Activated CD4-positive, alpha-beta T cell treated with anti-CD3 and anti-CD28 coated beads for 36 hours (primary cell): ENCODE measurements at regions of chr19 and their contacts with region 1.

Region 1: DNA sequence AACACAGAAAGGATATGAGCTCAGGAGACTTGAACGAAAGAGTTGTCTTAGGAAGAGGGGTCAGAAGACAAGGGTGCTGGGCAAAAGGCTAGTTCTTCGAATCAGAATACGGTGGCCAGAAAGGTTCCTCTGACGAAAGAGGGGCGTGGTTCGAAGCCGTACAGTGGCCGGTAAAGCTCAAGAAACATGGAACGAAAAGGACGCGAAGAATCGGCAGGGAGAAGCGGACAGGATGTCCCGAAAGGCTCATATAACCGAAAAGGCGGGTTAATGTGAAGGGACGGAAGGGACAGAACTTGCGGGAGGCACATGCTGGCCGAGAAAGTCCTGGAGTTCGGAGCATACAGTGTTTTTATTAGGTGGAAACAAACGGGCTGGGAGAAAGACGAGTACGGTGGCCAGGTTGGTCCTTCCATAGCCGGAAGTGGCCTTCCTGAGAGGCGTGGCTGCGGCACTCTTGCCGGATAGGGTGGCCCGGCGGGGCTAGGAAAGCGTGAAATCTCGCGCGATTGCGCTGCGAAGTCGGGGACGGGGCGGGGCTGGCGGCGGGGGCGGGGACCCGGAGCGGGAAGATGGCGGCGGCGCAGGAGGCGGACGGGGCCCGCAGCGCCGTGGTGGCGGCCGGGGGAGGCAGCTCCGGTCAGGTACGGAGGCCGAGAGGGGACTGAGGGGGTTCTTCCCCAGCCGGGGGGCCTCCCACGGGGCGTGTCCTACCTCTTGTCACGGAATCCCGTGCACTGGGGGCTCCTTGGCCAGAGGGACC is at the start of gene CLPTM1:
- DNase-seq: peak; percentile 99
- ATAC-seq: peak; percentile 94
- H3K4me3 Mint-ChIP-seq: peak within 1 kb of the TSS; percentile 95
- H3K27ac Mint-ChIP-seq: peak within 1 kb of the TSS; percentile 100
- H3K4me1 Mint-ChIP-seq: peaks cover 39% of the 10 kb centered on the region
- H3K27me3 Mint-ChIP-seq: no peaks in the 10 kb centered on the region
- total RNA-seq, gene CLPTM1: 41.6 to 44.1 TPM

Region 2: DNA sequence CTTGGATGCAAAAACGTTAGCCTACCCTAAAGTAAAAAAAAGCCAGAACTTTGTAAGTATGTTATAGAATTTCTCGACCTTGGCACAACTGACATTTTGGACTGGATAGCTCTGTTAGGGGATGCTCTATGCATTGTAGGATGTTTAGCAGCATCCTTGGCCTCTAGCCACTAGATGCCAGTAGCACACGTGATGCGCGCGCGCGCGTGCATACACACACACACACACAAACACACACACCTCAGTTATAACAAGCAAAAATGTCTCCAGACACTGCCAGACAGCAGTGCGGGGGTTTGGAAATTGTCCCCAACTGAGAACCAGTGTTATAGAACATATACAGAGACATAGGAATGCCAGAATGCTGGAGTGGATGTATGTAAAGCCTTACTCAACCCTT is 772.9 kb before region 1 on chr19:
- CTCF ChIA-PET with region 1: no interaction called
- POLR2A ChIA-PET with region 1: no interaction called
- intact Hi-C with region 1: no loop called
- DNase-seq: no peak
- ATAC-seq: no peak
- H3K4me3 Mint-ChIP-seq: no peak overlapping the region
- H3K27ac Mint-ChIP-seq: no peak overlapping the region
- H3K4me1 Mint-ChIP-seq: no peaks in the 10 kb centered on the region
- H3K27me3 Mint-ChIP-seq: no peaks in the 10 kb centered on the region

Region 3: GRCh38 chr19:44576843-44577565 is 378.0 kb before region 1 on chr19:
- CTCF ChIA-PET with region 1: no interaction called
- POLR2A ChIA-PET with region 1: no interaction called
- intact Hi-C with region 1: no loop called
- DNase-seq: peak; percentile 63
- ATAC-seq: peak; percentile 72
- H3K4me3 Mint-ChIP-seq: no peak overlapping the region
- H3K27ac Mint-ChIP-seq: no peak overlapping the region
- H3K4me1 Mint-ChIP-seq: no peaks in the 10 kb centered on the region
- H3K27me3 Mint-ChIP-seq: no peaks in the 10 kb centered on the region

Region 4: GRCh38 chr19:44689056-44689895 is 265.7 kb before region 1 on chr19:
- CTCF ChIA-PET with region 1: no interaction called
- POLR2A ChIA-PET with region 1: no interaction called
- intact Hi-C with region 1: loop called in 1 of 2 experiments (anchors 1 kb)
- DNase-seq: peak; percentile 90
- ATAC-seq: peak; percentile 39
- H3K4me3 Mint-ChIP-seq: no peak overlapping the region
- H3K27ac Mint-ChIP-seq: no peak overlapping the region
- H3K4me1 Mint-ChIP-seq: peaks cover 42% of the 10 kb centered on the region
- H3K27me3 Mint-ChIP-seq: peaks cover 17% of the 10 kb centered on the region

Region 5: GRCh38 chr19:44800461-44800860 is 154.5 kb before region 1 on chr19:
- CTCF ChIA-PET with region 1: no interaction called
- POLR2A ChIA-PET with region 1: no interaction called
- intact Hi-C with region 1: loop called in 1 of 2 experiments (anchors 1 kb)
- DNase-seq: peak; percentile 92
- ATAC-seq: peak; percentile 98
- H3K4me3 Mint-ChIP-seq: no peak overlapping the region
- H3K27ac Mint-ChIP-seq: no peak overlapping the region
- H3K4me1 Mint-ChIP-seq: peaks cover 11% of the 10 kb centered on the region
- H3K27me3 Mint-ChIP-seq: no peaks in the 10 kb centered on the region

Region 6: DNA sequence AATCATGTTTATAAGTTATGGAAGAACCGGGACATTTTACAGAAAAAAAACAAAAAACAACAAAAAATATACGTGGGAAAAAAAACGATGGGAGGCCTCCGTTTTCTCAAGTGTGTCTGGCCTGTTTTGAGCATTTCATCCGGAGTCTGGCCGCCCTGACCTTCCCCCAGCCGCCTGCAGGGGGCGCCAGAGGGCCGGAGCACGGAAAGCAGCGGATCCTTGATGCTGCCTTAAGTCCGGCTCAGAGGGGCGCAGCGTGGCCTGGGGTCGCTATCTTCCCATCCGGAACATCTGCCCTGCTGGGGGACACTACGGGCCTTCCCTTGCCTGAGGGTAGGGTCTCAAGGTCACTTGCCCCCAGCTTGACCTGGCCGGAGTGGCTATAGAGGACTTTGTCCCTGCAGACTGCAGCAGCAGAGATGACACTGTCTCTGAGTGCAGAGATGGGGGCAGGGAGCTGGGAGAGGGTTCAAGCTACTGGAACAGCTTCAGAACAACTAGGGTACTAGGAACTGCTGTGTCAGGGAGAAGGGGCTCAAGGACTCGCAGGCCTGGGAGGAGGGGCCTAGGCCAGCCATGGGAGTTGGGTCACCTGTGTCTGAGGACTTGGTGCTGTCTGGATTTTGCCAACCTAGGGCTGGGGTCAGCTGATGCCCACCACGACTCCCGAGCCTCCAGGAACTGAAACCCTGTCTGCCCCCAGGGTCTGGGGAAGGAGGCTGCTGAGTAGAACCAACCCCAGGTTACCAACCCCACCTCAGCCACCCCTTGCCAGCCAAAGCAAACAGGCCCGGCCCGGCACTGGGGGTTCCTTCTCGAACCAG is 51.2 kb before region 1 on chr19:
- CTCF ChIA-PET with region 1: interaction called, 8 read pairs
- POLR2A ChIA-PET with region 1: interaction called, 3 read pairs
- intact Hi-C with region 1: loop called (anchors 1 to 2 kb)
- DNase-seq: peak; percentile 85
- ATAC-seq: peak; percentile 67
- H3K4me3 Mint-ChIP-seq: no peak overlapping the region
- H3K27ac Mint-ChIP-seq: no peak overlapping the region
- H3K4me1 Mint-ChIP-seq: peaks cover 8% of the 10 kb centered on the region
- H3K27me3 Mint-ChIP-seq: peaks cover 17% of the 10 kb centered on the region

Region 7: DNA sequence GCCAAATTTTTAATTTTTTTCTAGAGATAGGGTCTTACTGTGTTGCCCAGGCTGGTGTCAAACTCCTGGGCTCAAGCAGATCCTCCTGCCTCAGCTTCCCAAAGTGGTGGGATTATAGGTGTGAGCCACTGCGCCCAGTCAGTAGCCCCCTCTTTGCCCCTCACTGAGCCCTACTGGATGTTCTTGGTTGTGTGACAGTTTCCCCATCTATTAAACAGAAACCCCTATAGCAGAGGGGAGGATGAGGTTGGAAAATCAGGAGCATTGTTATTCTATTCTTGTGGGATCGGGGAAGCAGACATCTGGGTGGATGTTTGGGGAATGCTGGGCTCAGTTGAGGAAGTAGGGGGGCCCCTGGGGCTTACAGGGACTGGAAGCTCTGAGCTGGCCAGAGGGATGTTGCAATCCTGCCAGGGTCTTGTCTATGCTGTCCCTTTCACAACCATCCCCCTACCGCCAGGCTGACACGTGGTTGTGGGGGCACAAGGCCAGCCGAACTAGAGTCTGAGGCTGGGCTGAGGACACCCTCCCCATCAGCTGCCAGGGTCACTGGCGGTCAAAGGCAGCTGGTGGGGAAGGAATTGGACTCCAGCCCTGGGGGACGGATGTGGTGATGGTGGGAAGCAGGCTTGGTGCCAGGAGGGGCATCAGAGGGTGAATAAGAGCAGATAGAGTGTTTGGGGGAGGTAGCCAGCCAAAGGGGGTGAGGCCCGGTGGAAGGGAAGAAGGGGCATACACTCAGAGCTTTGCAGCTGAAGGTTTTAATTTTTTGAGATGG is 29.7 kb before region 1 on chr19:
- CTCF ChIA-PET with region 1: no interaction called
- POLR2A ChIA-PET with region 1: no interaction called
- intact Hi-C with region 1: no loop called
- DNase-seq: no peak
- ATAC-seq: no peak
- H3K4me3 Mint-ChIP-seq: no peak overlapping the region
- H3K27ac Mint-ChIP-seq: no peak overlapping the region
- H3K4me1 Mint-ChIP-seq: peaks cover 4% of the 10 kb centered on the region
- H3K27me3 Mint-ChIP-seq: peaks cover 17% of the 10 kb centered on the region

Region 8: DNA sequence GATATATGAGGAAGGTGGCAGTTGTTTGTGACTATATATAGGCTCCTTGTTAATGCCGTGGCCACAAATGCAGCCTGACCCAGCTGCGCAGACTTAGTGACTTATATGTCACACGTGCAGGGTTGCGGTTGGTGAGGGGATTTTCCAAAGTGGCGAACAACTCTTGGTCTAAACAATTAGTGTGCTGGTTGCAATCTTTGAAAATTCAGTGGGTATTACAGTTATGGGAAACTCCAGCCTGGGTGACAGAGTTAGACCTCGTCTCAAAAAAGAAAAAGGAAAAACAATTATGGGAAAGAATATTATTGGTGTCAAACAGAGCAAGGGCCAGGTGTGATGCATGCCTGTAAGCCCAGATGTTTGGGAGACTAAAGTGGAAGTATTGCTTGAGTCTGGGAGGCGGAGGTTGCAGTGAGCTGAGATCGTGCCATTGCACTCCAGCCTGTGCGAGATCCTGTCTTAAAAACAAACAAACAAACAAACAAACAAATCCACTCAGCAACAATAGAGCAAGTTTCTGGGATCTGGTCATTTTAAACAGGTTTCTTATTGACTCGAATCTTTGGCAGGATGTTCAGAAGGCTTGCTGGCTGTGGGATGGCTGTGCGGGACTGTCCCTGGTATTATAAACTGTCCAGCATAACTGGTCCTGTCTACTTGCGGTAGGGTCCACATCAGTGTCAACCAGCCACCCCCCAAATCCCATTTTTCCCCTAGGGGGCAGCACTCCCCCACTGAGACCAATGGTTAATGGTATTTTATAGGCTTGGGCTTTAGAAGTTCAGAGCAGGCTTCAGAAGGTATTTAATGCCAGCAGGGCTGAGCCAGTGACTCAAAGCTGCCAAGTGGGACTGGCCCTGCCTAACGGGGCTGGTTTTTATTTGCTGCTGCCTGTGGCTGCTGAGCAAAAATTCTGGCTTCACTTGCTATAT is 61.6 kb after region 1 on chr19:
- CTCF ChIA-PET with region 1: no interaction called
- POLR2A ChIA-PET with region 1: no interaction called
- intact Hi-C with region 1: no loop called
- DNase-seq: peak; percentile 83
- ATAC-seq: peak; percentile 79
- H3K4me3 Mint-ChIP-seq: peak overlapping the region; percentile 40
- H3K27ac Mint-ChIP-seq: peak overlapping the region; percentile 83
- H3K4me1 Mint-ChIP-seq: peaks cover 9% of the 10 kb centered on the region
- H3K27me3 Mint-ChIP-seq: no peaks in the 10 kb centered on the region

Region 9: GRCh38 chr19:45038931-45039893 is 84.2 kb after region 1 on chr19 and contains the start of gene CLASRP:
- CTCF ChIA-PET with region 1: no interaction called
- POLR2A ChIA-PET with region 1: interaction called, 4 read pairs
- intact Hi-C with region 1: loop called in 1 of 2 experiments (anchors 1 kb)
- DNase-seq: peak; percentile 94
- ATAC-seq: peak; percentile 96
- H3K4me3 Mint-ChIP-seq: peak within 1 kb of the TSS; percentile 97
- H3K27ac Mint-ChIP-seq: peak within 1 kb of the TSS; percentile 96
- H3K4me1 Mint-ChIP-seq: peaks cover 32% of the 10 kb centered on the region
- H3K27me3 Mint-ChIP-seq: no peaks in the 10 kb centered on the region
- total RNA-seq, gene CLASRP: 101 to 103 TPM

Region 10: DNA sequence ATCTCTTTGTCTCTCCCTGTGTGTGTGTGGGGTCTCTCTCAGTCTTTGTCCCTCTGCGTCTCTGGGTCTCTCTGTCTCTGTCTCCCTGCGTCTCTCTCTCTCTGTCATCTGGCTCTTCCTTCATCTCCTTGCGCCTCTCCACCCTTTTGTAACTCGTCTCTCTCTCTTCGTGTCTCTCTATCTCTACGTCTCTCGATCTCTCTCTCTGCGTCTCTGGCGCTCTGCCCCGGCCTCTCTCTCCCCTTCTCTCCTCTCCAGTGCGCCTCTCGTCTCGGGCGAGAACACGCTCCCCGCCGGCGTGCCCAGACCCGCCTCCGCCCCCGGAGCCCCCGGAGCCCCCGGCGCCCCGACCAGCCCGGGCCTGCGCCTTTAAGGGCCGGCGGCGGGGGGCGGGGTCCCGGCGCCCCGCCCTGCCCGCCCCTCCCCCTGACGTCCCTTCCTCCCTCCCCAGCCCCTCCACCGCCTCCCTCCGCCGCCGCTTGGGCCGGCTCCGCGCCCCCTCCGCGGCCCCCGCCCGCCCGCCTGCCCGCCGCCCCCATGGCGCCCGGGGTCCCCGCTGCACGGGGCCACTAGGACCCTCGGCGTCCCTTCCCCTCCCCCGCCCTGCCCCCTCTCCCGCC is 295.9 kb after region 1 on chr19 and contains the start of gene MARK4:
- CTCF ChIA-PET with region 1: no interaction called
- POLR2A ChIA-PET with region 1: no interaction called
- intact Hi-C with region 1: loop called in 1 of 2 experiments (anchors 1 kb)
- DNase-seq: peak; percentile 72
- ATAC-seq: peak; percentile 67
- H3K4me3 Mint-ChIP-seq: peak within 1 kb of the TSS; percentile 77
- H3K27ac Mint-ChIP-seq: peak within 1 kb of the TSS; percentile 76
- H3K4me1 Mint-ChIP-seq: peaks cover 29% of the 10 kb centered on the region
- H3K27me3 Mint-ChIP-seq: peaks cover 2% of the 10 kb centered on the region
- total RNA-seq, gene MARK4: 19.1 to 19.6 TPM

Region 11: GRCh38 chr19:45886427-45887199 is 931.6 kb after region 1 on chr19:
- CTCF ChIA-PET with region 1: no interaction called
- POLR2A ChIA-PET with region 1: no interaction called
- intact Hi-C with region 1: loop called in 1 of 2 experiments (anchors 5 kb)
- DNase-seq: peak; percentile 96
- ATAC-seq: peak; percentile 85
- H3K4me3 Mint-ChIP-seq: peak overlapping the region; percentile 85
- H3K27ac Mint-ChIP-seq: peak overlapping the region; percentile 95
- H3K4me1 Mint-ChIP-seq: peaks cover 17% of the 10 kb centered on the region
- H3K27me3 Mint-ChIP-seq: no peaks in the 10 kb centered on the region